Sigmoid colon (tissue), 7 donors: ENCODE measurements at regions of chr9 and their contacts with region 1.

Region 1: GRCh38 chr9:124551472-124552272 is 44.5 kb upstream of the NR5A1 start:
- DNase-seq: no peak
- H3K4me3 ChIP-seq: no peak overlapping the region
- H3K27ac ChIP-seq: no peak overlapping the region
- H3K4me1 ChIP-seq: peaks cover 0 to 6% (median 0%) of the 10 kb centered on the region in 4 donors
- H3K27me3 ChIP-seq: no peaks in the 10 kb centered on the region
- CTCF ChIP-seq: peak in 3 of 4 experiments; percentile 12 to 29 (median 26)
- EP300 ChIP-seq: no peak
- POLR2A ChIP-seq: no peak

Region 2: GRCh38 chr9:124110307-124110915 is 441.3 kb before region 1 on chr9:
- intact Hi-C with region 1: no loop called
- DNase-seq: no peak
- H3K4me3 ChIP-seq: no peak overlapping the region
- H3K27ac ChIP-seq: no peak overlapping the region
- H3K4me1 ChIP-seq: no peaks in the 10 kb centered on the region
- H3K27me3 ChIP-seq: peaks cover 0 to 4% (median 0%) of the 10 kb centered on the region in 3 donors
- CTCF ChIP-seq: no peak
- EP300 ChIP-seq: no peak
- POLR2A ChIP-seq: no peak

Region 3: GRCh38 chr9:124330011-124330697 is 221.5 kb before region 1 on chr9:
- intact Hi-C with region 1: no loop called
- DNase-seq: no peak
- H3K4me3 ChIP-seq: no peak overlapping the region
- H3K27ac ChIP-seq: no peak overlapping the region
- H3K4me1 ChIP-seq: no peaks in the 10 kb centered on the region
- H3K27me3 ChIP-seq: no peaks in the 10 kb centered on the region
- CTCF ChIP-seq: no peak
- EP300 ChIP-seq: no peak
- POLR2A ChIP-seq: no peak

Region 4: DNA sequence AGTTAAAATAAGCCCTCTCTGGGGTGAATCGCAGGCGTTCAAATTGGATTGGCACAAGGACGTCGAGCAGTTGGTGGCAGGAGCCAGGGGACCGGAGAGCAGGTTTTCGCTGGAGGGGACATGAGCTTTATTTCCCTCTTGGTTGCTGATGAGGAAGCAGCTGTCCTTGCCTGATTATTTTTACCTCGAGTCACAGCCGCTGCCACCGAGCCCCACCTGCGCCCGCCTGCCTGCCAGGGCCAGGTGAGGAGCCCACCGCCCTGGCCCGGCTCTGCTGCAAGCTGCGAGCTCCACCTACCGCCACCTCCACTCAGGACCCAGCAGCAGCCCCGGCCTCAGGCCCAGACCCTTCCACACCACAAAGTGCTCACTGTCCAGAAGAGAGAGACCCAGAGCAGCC is 110.4 kb before region 1 on chr9:
- intact Hi-C with region 1: no loop called
- DNase-seq: peak; percentile 26
- H3K4me3 ChIP-seq: no peak overlapping the region
- H3K27ac ChIP-seq: no peak overlapping the region
- H3K4me1 ChIP-seq: no peaks in the 10 kb centered on the region
- H3K27me3 ChIP-seq: peaks cover 0 to 1% (median 0%) of the 10 kb centered on the region in 3 donors
- CTCF ChIP-seq: no peak
- EP300 ChIP-seq: no peak
- POLR2A ChIP-seq: no peak

Region 5: DNA sequence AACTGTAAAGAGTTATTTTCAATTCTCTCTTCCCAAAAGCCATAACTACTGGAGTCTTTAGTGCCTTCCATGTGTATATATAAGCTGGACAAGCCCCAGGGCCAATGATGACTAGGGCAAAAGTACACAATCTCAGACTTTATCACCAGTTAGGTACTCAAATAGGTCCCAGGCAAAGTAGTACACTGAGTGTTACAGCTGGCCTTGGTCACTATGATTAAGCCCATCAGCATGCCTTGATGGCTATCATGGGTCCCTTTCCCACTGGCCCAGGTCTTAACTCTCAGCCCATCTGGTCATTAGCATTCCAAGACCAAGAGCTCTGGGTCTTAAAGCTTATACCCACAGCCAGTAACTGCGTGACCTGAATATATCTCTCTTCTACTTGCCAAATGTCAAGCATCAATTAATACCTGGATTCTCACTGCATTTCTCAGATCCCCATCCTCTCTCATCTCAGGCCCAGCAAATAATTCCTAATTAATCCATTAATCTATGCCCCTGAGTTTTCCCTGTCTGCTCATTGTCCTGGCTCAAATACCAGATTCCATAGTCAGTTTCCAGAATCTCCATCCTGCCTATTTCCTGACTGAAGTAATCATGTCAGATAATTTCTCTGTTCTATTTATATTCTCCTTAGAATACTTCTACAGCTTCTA is 157.1 kb after region 1 on chr9:
- intact Hi-C with region 1: loop called (anchors 5 kb)
- DNase-seq: no peak
- H3K4me3 ChIP-seq: no peak overlapping the region
- H3K27ac ChIP-seq: no peak overlapping the region
- H3K4me1 ChIP-seq: peaks cover 0 to 11% (median 2%) of the 10 kb centered on the region in 4 donors
- H3K27me3 ChIP-seq: no peaks in the 10 kb centered on the region
- CTCF ChIP-seq: no peak
- EP300 ChIP-seq: no peak
- POLR2A ChIP-seq: no peak